ENCODE measurements at regions of chr17 and their contacts with region 1.

Region 1: DNA sequence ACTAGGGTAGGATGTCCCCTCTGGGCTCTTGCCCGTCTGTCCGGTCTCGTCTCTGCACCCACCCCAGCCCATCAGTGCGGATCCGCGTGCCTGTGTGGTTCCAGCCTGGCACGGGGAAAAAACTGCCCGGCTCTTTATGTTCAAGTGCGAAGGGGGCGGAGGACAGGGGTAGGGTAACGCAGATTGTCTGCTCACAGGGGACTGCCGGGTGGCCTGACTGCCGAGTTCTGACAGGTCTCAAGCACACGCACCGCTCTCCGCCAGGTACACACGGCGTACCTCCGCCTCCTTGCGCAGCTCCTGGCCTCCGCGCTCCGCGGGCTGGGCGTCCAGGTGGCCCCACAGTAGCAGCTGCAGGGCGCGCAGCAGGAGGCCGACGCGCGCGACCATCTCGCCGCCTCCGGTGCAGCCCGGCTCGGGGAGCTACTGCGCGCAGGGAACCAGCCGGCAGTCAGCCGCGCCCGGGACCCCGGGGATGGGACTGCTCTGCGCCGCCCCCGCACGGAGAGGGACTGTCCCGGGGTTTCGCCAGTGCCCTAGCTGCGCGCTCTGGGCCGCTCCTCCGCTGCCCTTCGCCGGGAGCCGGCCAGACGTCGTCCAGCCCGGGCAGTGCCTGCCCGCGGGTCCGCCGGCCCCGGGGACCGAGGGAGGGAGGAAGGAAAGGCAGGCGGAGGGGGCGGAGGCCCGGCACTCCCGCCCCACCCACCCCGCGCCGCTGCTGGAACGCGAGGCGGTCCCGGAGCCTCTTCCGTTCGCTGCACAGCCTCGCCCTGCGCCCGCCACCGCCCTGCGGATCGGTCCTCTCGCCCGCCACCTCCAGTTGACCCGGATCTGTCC is at the start of gene MMP28:
- DNase-seq: peak in 2 of 3 donors; percentile 51 to 68
- H3K4me3 ChIP-seq: peak within 1 kb of the TSS; percentile 61 to 89 (median 71)
- H3K27ac ChIP-seq: no peak within 1 kb of the TSS
- H3K4me1 ChIP-seq: peaks cover 0 to 38% (median 28%) of the 10 kb centered on the region in 4 experiments
- H3K27me3 ChIP-seq: no peaks in the 10 kb centered on the region

Region 2: DNA sequence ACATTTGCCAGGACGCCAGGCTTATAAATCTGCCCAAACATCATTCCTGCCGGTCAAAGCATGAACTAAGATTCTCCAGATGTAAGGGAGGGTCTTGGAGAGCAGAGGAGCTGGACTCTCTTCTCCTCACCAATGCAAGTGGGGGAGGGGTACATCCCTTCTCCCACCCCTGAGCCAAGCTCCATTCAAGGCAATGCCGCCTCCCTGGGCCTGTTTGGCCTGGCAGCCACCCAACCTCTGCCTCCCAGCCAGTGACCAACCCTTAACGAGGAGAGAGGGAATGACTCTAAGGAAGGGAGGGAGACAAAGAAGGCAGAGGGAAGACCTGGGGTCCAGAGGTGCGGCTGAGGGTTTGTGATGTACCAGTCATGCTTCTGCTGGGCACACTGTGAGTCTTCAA is 20.7 kb before region 1 on chr17:
- CTCF ChIA-PET with region 1: interaction called, 139 read pairs
- POLR2A ChIA-PET with region 1: no interaction called
- DNase-seq: no peak
- H3K4me3 ChIP-seq: no peak overlapping the region
- H3K27ac ChIP-seq: no peak overlapping the region
- H3K4me1 ChIP-seq: peaks cover 4 to 48% (median 38%) of the 10 kb centered on the region in 4 experiments
- H3K27me3 ChIP-seq: no peaks in the 10 kb centered on the region

Region 3: GRCh38 chr17:35808962-35809854 is 14.0 kb after region 1 on chr17 and contains the start of gene TAF15:
- CTCF ChIA-PET with region 1: interaction called, 15 read pairs
- POLR2A ChIA-PET with region 1: no interaction called
- DNase-seq: peak; percentile 99
- H3K4me3 ChIP-seq: peak within 1 kb of the TSS; percentile 87 to 99 (median 93)
- H3K27ac ChIP-seq: peak within 1 kb of the TSS; percentile 94 to 97
- H3K4me1 ChIP-seq: peaks cover 13 to 52% (median 38%) of the 10 kb centered on the region in 4 experiments
- H3K27me3 ChIP-seq: no peaks in the 10 kb centered on the region

Measured in common myeloid progenitor, CD34-positive (primary cell).